ENCODE measurements at regions of chr22 and their contacts with region 1.

Region 1: DNA sequence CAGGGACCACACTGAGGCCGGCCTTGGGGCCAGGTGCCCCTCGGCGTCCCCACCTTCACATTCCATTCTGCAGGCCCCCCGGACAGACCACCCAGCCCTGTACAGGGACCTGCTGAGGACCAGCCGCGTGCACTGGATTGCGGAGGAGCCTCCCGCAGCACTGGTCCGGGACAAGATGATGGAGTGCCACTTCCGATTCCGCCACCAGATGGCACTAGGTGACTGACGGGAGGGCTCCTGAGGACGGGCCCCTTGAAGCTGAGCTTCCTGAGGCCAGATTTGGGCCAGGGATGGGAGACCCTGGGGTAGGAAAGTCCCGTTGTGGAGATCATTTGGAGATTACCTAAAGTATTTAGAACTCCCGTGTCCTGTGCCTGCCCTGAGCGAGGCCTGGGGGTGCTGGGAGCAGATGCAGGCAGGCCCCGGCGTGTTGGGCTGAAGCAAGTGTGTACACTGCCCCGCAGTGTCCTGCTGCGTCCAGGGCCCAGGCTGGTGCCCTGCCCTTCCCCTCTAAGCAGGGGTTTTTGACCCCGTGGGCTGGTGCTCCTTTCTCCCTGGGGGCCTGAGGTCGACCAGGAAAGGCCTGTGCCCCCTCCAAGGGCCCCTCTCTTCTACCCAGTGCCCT is 20.0 kb downstream of the TRMU start:
- H3K4me3 ChIP-seq: no peak overlapping the region
- H3K27ac ChIP-seq: no peak overlapping the region
- H3K4me1 ChIP-seq: peaks cover 6% of the 10 kb centered on the region; the same call in 1 of the 2 replicates
- CTCF ChIP-seq: peak; percentile 82

Region 2: GRCh38 chr22:46450931-46451561 is 95.6 kb after region 1 on chr22:
- CTCF ChIA-PET with region 1: no interaction called
- POLR2A ChIA-PET with region 1: no interaction called
- H3K4me3 ChIP-seq: no peak overlapping the region
- H3K27ac ChIP-seq: no peak overlapping the region
- H3K4me1 ChIP-seq: peaks cover 8% of the 10 kb centered on the region
- CTCF ChIP-seq: no peak

Region 3: GRCh38 chr22:46542011-46542985 is 186.8 kb after region 1 on chr22:
- CTCF ChIA-PET with region 1: interaction called, 36 read pairs
- POLR2A ChIA-PET with region 1: no interaction called
- H3K4me3 ChIP-seq: no peak overlapping the region
- H3K27ac ChIP-seq: no peak overlapping the region
- H3K4me1 ChIP-seq: peaks cover 5% of the 10 kb centered on the region
- CTCF ChIP-seq: peak; percentile 95